GM12878 (cell line): ENCODE measurements at regions of chr4 and their contacts with region 1.

Region 1: DNA sequence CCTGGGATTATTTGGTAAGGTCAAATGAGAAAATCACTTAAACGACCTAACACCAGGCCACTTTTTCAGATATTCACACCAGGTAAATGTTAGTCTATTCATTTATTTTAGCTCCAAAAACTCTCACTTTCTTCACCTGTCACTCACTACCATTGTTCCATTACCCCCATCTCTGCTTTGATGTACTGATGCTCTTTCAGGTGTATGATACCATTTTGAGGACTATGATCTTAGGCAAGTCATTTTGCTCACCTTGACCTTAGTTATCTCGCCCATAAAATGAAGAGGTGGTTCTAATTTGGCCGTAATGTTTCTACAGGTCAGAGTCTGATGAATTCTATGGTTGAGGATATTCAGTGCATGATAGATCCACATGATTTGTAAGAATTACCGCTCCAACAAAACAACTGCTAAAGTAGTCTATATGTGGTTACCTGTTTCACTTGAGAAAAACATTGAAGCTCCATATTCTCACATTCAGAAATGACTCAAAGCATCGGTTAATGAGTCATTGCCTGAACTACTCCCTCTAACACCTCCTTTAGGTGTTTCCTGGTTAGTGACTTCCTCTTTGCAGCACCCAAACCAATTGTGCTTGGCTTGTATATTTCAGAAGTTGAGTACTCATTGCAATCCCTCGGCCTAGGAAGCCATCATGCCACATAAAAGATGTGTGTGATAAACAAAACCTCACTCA is 4.5 kb downstream of the DTHD1 start:
- DNase-seq: peak; percentile 93
- ATAC-seq: peak; percentile 99
- H3K4me3 ChIP-seq: peak overlapping the region; percentile 38
- H3K27ac ChIP-seq: peak overlapping the region; percentile 54
- H3K4me1 ChIP-seq: peaks cover 7% of the 10 kb centered on the region; the same call in 1 of the 2 replicates
- H3K27me3 ChIP-seq: no peaks in the 10 kb centered on the region
- CTCF ChIP-seq: no peak
- EP300 ChIP-seq: peak; percentile 90 to 98
- POLR2A ChIP-seq: no peak
- RAD21 ChIP-seq: peak; percentile 42

Region 2: GRCh38 chr4:36255577-36255976 is 30.4 kb before region 1 on chr4:
- CTCF ChIA-PET with region 1: interaction called, 16 read pairs
- POLR2A ChIA-PET with region 1: interaction called, 7 read pairs
- RAD21 ChIA-PET with region 1: interaction called, 6 read pairs
- SMC1A ChIA-PET with region 1: interaction called, 28 read pairs
- in situ Hi-C with region 1: no loop called
- intact Hi-C with region 1: loop called (anchors 1 kb)
- DNase-seq: peak; percentile 92
- ATAC-seq: peak; percentile 87
- H3K4me3 ChIP-seq: no peak overlapping the region
- H3K27ac ChIP-seq: peak overlapping the region; percentile 85
- H3K4me1 ChIP-seq: peaks cover 11% of the 10 kb centered on the region
- H3K27me3 ChIP-seq: no peaks in the 10 kb centered on the region
- CTCF ChIP-seq: no peak
- EP300 ChIP-seq: no peak; a peak in 1 of 4 replicates
- POLR2A ChIP-seq: no peak
- RAD21 ChIP-seq: 0 out of 2 replicates have a peak, but pooled peaks have one; percentile 16

Region 3: GRCh38 chr4:36303426-36304137 is 17.6 kb after region 1 on chr4:
- CTCF ChIA-PET with region 1: interaction called, 3 read pairs
- POLR2A ChIA-PET with region 1: no interaction called
- RAD21 ChIA-PET with region 1: interaction called, 3 read pairs
- SMC1A ChIA-PET with region 1: interaction called, 3 read pairs
- in situ Hi-C with region 1: no loop called
- intact Hi-C with region 1: loop called (anchors 2 kb)
- DNase-seq: no peak
- ATAC-seq: peak; percentile 90
- H3K4me3 ChIP-seq: no peak overlapping the region
- H3K27ac ChIP-seq: no peak overlapping the region
- H3K4me1 ChIP-seq: peaks cover 5% of the 10 kb centered on the region; the same call in 1 of the 2 replicates
- H3K27me3 ChIP-seq: no peaks in the 10 kb centered on the region
- CTCF ChIP-seq: no peak
- EP300 ChIP-seq: no peak; a peak in 1 of 4 replicates
- POLR2A ChIP-seq: no peak
- RAD21 ChIP-seq: no peak

Region 4: DNA sequence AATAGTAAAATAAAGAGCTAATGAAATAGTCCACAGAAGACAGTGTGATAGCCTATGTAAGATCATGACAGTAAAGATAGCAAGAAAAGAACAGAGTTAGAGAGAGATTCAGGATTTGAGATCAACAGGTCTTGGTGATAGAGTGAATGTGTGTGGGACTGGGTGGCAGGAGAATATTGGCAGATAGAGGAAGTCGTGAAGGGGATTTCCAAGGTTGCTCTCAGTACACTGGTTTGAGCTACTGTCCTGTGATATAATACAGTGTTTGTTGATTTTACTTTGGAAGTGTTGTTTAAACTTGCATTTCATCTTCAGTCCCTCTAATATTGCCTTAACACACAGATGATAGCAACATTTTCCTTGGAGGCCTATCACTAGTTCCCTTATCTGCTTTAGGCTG is 39.6 kb after region 1 on chr4:
- CTCF ChIA-PET with region 1: interaction called, 3 read pairs
- POLR2A ChIA-PET with region 1: interaction called, 8 read pairs
- RAD21 ChIA-PET with region 1: interaction called, 3 read pairs
- SMC1A ChIA-PET with region 1: interaction called, 6 read pairs
- in situ Hi-C with region 1: no loop called
- intact Hi-C with region 1: loop called (anchors 1 kb)
- DNase-seq: peak; percentile 59
- ATAC-seq: peak; percentile 92
- H3K4me3 ChIP-seq: no peak overlapping the region
- H3K27ac ChIP-seq: peak overlapping the region; percentile 93
- H3K4me1 ChIP-seq: peaks cover 57% of the 10 kb centered on the region
- H3K27me3 ChIP-seq: no peaks in the 10 kb centered on the region
- CTCF ChIP-seq: no peak
- EP300 ChIP-seq: 0 out of 4 replicates have a peak, but pooled peaks of 1 of the 2 experiments have one; percentile 16
- POLR2A ChIP-seq: no peak
- RAD21 ChIP-seq: no peak

Region 5: DNA sequence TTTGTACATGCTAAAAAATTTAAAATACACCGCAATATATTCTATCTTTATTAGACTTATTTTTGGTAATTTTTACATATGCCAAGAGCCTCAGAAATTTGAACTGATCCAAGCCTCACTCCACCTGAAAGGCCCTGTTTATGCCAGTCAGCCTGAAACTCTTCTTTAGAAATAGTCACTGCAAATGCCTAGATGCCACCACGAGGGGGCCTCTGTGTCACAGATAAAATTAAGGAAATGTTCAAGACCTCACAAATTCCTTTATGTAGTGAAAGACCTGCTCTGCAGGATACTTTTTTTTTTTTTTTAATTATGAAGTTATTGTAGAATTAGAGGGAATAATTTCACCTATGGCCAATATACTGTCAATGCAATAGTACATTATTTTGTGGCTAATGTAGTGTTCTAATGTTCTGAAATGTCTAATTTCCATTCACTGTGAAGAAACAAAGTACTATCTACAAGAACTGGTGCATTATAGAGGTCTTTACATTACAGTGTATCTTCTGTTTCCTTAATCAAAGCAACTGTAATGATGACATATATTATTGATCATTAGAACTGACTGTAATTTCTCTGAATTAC is 65.2 kb after region 1 on chr4:
- CTCF ChIA-PET with region 1: interaction called, 5 read pairs
- POLR2A ChIA-PET with region 1: interaction called, 6 read pairs
- RAD21 ChIA-PET with region 1: interaction called, 17 read pairs
- SMC1A ChIA-PET with region 1: interaction called, 6 read pairs
- in situ Hi-C with region 1: no loop called
- intact Hi-C with region 1: no loop called
- DNase-seq: peak; percentile 37
- ATAC-seq: peak; percentile 72
- H3K4me3 ChIP-seq: no peak overlapping the region
- H3K27ac ChIP-seq: no peak overlapping the region
- H3K4me1 ChIP-seq: peaks cover 13% of the 10 kb centered on the region
- H3K27me3 ChIP-seq: no peaks in the 10 kb centered on the region
- CTCF ChIP-seq: peak; percentile 70 to 87 (median 78)
- EP300 ChIP-seq: no peak
- POLR2A ChIP-seq: no peak
- RAD21 ChIP-seq: peak; percentile 96

Region 6: GRCh38 chr4:36601864-36602495 is 316.0 kb after region 1 on chr4:
- CTCF ChIA-PET with region 1: no interaction called
- POLR2A ChIA-PET with region 1: no interaction called
- RAD21 ChIA-PET with region 1: no interaction called
- SMC1A ChIA-PET with region 1: no interaction called
- in situ Hi-C with region 1: no loop called
- intact Hi-C with region 1: no loop called
- DNase-seq: no peak
- ATAC-seq: no peak
- H3K4me3 ChIP-seq: no peak overlapping the region
- H3K27ac ChIP-seq: no peak overlapping the region
- H3K4me1 ChIP-seq: no peaks in the 10 kb centered on the region
- H3K27me3 ChIP-seq: no peaks in the 10 kb centered on the region
- CTCF ChIP-seq: no peak
- EP300 ChIP-seq: no peak
- POLR2A ChIP-seq: no peak
- RAD21 ChIP-seq: no peak